ENCODE measurements at regions of chr1 and their contacts with region 1.

Region 1: GRCh38 chr1:245045087-245045881 is 109.5 kb upstream of the KIF26B start:
- DNase-seq: peak; percentile 98
- ATAC-seq: peak; percentile 98
- H3K4me3 ChIP-seq: peak overlapping the region; percentile 47 to 68 (median 56)
- H3K27ac ChIP-seq: peak overlapping the region; percentile 94
- H3K4me1 ChIP-seq: peaks cover 48% of the 10 kb centered on the region
- H3K27me3 ChIP-seq: no peaks in the 10 kb centered on the region
- CTCF ChIP-seq: 0 out of 2 replicates have a peak, but pooled peaks have one; percentile 7
- EP300 ChIP-seq: no peak; a peak in 1 of 4 replicates
- POLR2A ChIP-seq: peak; percentile 58 to 69
- RAD21 ChIP-seq: 0 out of 2 replicates have a peak, but pooled peaks have one; percentile 20

Region 2: GRCh38 chr1:244652699-244653466 is 392.4 kb before region 1 on chr1 and contains the start of gene DESI2:
- CTCF ChIA-PET with region 1: no interaction called
- POLR2A ChIA-PET with region 1: no interaction called
- in situ Hi-C with region 1: no loop called
- intact Hi-C with region 1: loop called (anchors 5 kb)
- DNase-seq: peak; percentile 99
- ATAC-seq: peak; percentile 97
- H3K4me3 ChIP-seq: peak within 1 kb of the TSS; percentile 69 to 94 (median 94)
- H3K27ac ChIP-seq: peak within 1 kb of the TSS; percentile 83
- H3K4me1 ChIP-seq: peaks cover 27% of the 10 kb centered on the region
- H3K27me3 ChIP-seq: no peaks in the 10 kb centered on the region; a peak in 1 of 5 replicates
- CTCF ChIP-seq: peak; percentile 71
- EP300 ChIP-seq: peak in 1 of 2 experiments; percentile 42; a peak in 2 of 4 replicates
- POLR2A ChIP-seq: peak; percentile 87 to 88
- RAD21 ChIP-seq: peak; percentile 67
- total RNA-seq, gene DESI2: 42.2 and 62.0 TPM in 2 replicates

Region 3: DNA sequence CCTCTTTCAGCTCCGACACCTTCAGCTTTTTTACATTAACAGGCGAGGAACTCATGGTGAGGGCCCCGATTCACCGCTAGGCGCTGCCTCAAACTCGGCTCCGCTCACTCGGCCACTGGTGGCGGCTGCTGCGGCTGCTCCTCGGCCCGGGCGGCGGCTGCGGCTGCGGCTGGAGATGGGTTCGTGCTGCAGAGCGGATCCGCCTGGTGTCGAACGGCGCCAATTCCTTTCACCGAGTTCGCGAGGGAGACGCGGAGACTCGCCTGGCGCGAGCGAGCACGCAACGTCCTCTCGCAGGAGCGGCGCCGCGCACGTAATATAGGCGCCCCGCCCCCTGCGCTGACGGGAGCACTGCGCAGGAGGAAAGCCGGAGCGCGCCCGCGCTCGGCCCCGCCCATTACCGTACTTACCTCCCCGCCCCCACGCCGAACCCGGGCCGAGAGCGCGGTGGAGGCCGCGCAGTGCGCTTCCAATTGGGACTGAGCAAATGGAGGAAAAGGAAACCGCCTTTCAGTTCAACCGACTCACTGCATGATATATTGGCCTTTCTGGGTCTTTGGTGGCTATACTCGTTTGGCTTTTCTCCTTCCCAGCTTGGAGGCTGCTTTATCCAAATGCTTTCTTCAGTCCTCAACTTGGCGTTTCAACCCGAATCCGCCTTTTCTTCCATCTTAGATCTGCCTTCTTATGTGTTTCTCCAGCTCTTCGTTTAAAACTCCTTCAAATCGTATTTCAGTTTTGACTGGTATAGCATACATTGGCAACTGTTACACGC is 180.8 kb before region 1 on chr1 and contains the start of gene HNRNPU:
- CTCF ChIA-PET with region 1: no interaction called
- POLR2A ChIA-PET with region 1: interaction called, 8 read pairs
- in situ Hi-C with region 1: loop called (anchors 5 kb)
- intact Hi-C with region 1: loop called (anchors 1 kb)
- DNase-seq: peak; percentile 89
- ATAC-seq: peak; percentile 78
- H3K4me3 ChIP-seq: peak within 1 kb of the TSS; percentile 97 to 100 (median 99)
- H3K27ac ChIP-seq: peak within 1 kb of the TSS; percentile 100
- H3K4me1 ChIP-seq: peaks cover 54% of the 10 kb centered on the region
- H3K27me3 ChIP-seq: no peaks in the 10 kb centered on the region; a peak in 1 of 5 replicates
- CTCF ChIP-seq: peak; percentile 39; the same call in 1 of the 2 replicates
- EP300 ChIP-seq: peak in 1 of 2 experiments; percentile 28; a peak in 1 of 4 replicates
- POLR2A ChIP-seq: peak; percentile 91 to 97
- RAD21 ChIP-seq: peak; percentile 50
- total RNA-seq, gene HNRNPU: 508 and 657 TPM in 2 replicates

Region 4: GRCh38 chr1:245060684-245061374 is 15.5 kb after region 1 on chr1:
- CTCF ChIA-PET with region 1: no interaction called
- POLR2A ChIA-PET with region 1: interaction called, 10 read pairs
- in situ Hi-C with region 1: no loop called
- intact Hi-C with region 1: loop called (anchors 1 kb)
- DNase-seq: peak; percentile 95
- ATAC-seq: peak; percentile 96
- H3K4me3 ChIP-seq: peak overlapping the region in 1 of 3 experiments; percentile 9; a peak in 1 of 6 replicates
- H3K27ac ChIP-seq: peak overlapping the region; percentile 94
- H3K4me1 ChIP-seq: peaks cover 45% of the 10 kb centered on the region
- H3K27me3 ChIP-seq: no peaks in the 10 kb centered on the region
- CTCF ChIP-seq: no peak
- EP300 ChIP-seq: peak; percentile 63 to 90
- POLR2A ChIP-seq: no peak
- RAD21 ChIP-seq: no peak

Region 5: GRCh38 chr1:245070831-245071615 is 25.7 kb after region 1 on chr1:
- CTCF ChIA-PET with region 1: no interaction called
- POLR2A ChIA-PET with region 1: no interaction called
- in situ Hi-C with region 1: no loop called
- intact Hi-C with region 1: no loop called
- DNase-seq: no peak
- ATAC-seq: no peak
- H3K4me3 ChIP-seq: no peak overlapping the region
- H3K27ac ChIP-seq: no peak overlapping the region
- H3K4me1 ChIP-seq: no peaks in the 10 kb centered on the region
- H3K27me3 ChIP-seq: no peaks in the 10 kb centered on the region
- CTCF ChIP-seq: no peak
- EP300 ChIP-seq: no peak
- POLR2A ChIP-seq: no peak
- RAD21 ChIP-seq: no peak

Measured in HepG2 (cell line).